GM10248 (cell line): ENCODE measurements at regions of chr12 and their contacts with region 1.

Region 1: GRCh38 chr12:123655420-123655819 is 15.5 kb upstream of the TCTN2 start:
- DNase-seq: peak; percentile 47
- CTCF ChIP-seq: no peak

Region 2: GRCh38 chr12:123667791-123668560 is 12.6 kb after region 1 on chr12:
- CTCF ChIA-PET with region 1: interaction called, 10 read pairs
- POLR2A ChIA-PET with region 1: no interaction called
- DNase-seq: no peak
- CTCF ChIP-seq: no peak

Region 3: DNA sequence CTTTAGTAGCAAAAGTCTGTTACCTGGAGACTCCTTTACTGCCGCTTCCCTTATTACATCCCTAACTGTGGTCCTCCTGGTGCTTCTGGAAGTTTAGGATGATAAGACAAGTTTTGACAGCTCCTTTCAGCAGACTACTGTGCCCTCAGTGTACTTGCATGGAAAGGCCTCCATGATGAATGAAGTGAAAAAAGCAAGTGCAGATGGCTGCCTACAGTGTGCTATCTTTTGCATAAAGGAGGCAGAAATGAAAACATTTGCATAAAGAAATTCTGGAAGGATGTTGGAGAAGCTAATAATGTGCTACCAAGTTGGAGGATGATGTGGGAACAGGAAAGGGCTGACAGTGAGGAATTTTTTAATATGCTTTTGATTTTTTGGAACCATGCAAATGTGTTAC is 20.0 kb after region 1 on chr12:
- CTCF ChIA-PET with region 1: interaction called, 10 read pairs
- POLR2A ChIA-PET with region 1: no interaction called
- DNase-seq: no peak
- CTCF ChIP-seq: no peak

Region 4: GRCh38 chr12:123744836-123745235 is 89.4 kb after region 1 on chr12:
- CTCF ChIA-PET with region 1: no interaction called
- POLR2A ChIA-PET with region 1: no interaction called
- DNase-seq: no peak
- CTCF ChIP-seq: no peak